Right ventricle myocardium inferior (tissue), 1 donor: ENCODE measurements at regions of chr2 and their contacts with region 1.

Region 1: GRCh38 chr2:215460682-215461382 is 25.0 kb upstream of the FN1 start:
- DNase-seq: no peak
- ATAC-seq: peak; percentile 62

Region 2: DNA sequence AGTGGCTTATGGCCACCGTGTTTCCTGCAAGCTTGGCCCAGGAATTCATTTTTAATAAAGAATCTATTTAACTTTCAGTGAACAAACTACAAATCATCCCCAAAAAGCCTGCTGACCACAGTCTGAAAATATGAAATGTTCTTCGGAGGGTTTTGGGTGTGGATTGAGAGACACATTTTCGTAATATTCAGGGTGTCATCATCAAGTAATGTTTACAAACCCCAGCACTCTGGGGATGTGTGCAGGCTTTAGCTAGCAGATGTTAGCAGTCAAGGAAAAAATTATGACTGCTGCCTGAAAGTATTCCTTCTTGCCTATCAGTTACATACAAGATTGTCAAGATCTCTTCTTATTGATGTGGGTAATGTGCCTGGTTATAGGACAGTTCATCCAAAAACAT is 119.0 kb after region 1 on chr2:
- intact Hi-C with region 1: loop called (anchors 10 kb)
- DNase-seq: no peak
- ATAC-seq: peak; percentile 95